ENCODE measurements at regions of chr20 and their contacts with region 1.

Region 1: GRCh38 chr20:2101865-2102584 is 398 bp downstream of the STK35 start:
- DNase-seq: peak; percentile 79 to 95 (median 91)
- ATAC-seq: peak; percentile 75
- H3K4me3 ChIP-seq: peak overlapping the region; percentile 79 to 100
- H3K4me3 Mint-ChIP-seq: peak overlapping the region; percentile 95
- H3K27ac ChIP-seq: peak overlapping the region; percentile 98 to 100
- H3K27ac Mint-ChIP-seq: peak overlapping the region; percentile 100
- H3K4me1 ChIP-seq: peaks cover 48% of the 10 kb centered on the region
- H3K4me1 Mint-ChIP-seq: peaks cover 41% of the 10 kb centered on the region
- H3K27me3 ChIP-seq: no peaks in the 10 kb centered on the region
- H3K27me3 Mint-ChIP-seq: no peaks in the 10 kb centered on the region
- CTCF ChIP-seq: no peak

Region 2: GRCh38 chr20:844473-845225 is 1257.4 kb before region 1 on chr20:
- CTCF ChIA-PET with region 1: no interaction called
- POLR2A ChIA-PET with region 1: no interaction called
- intact Hi-C with region 1: loop called in 1 of 2 experiments (anchors 10 kb)
- DNase-seq: peak; percentile 81 to 97 (median 90)
- ATAC-seq: peak; percentile 94
- H3K4me3 ChIP-seq: peak overlapping the region; percentile 65 to 71
- H3K4me3 Mint-ChIP-seq: peak overlapping the region; percentile 94
- H3K27ac ChIP-seq: peak overlapping the region; percentile 26 to 48
- H3K27ac Mint-ChIP-seq: peak overlapping the region; percentile 84
- H3K4me1 ChIP-seq: peaks cover 52% of the 10 kb centered on the region
- H3K4me1 Mint-ChIP-seq: peaks cover 54% of the 10 kb centered on the region
- H3K27me3 ChIP-seq: no peaks in the 10 kb centered on the region
- H3K27me3 Mint-ChIP-seq: no peaks in the 10 kb centered on the region
- CTCF ChIP-seq: no peak

Region 3: GRCh38 chr20:2470423-2471193 is 368.6 kb after region 1 on chr20 and contains the start of gene SNRPB:
- CTCF ChIA-PET with region 1: no interaction called
- POLR2A ChIA-PET with region 1: interaction called, 8 read pairs
- intact Hi-C with region 1: loop called in 1 of 2 experiments (anchors 2 kb)
- DNase-seq: peak; percentile 93 to 99 (median 97)
- ATAC-seq: peak; percentile 93
- H3K4me3 ChIP-seq: peak within 1 kb of the TSS; percentile 76 to 99
- H3K4me3 Mint-ChIP-seq: peak within 1 kb of the TSS; percentile 99
- H3K27ac ChIP-seq: peak within 1 kb of the TSS; percentile 95 to 99
- H3K27ac Mint-ChIP-seq: peak within 1 kb of the TSS; percentile 98
- H3K4me1 ChIP-seq: peaks cover 21% of the 10 kb centered on the region
- H3K4me1 Mint-ChIP-seq: peaks cover 44% of the 10 kb centered on the region
- H3K27me3 ChIP-seq: no peaks in the 10 kb centered on the region
- H3K27me3 Mint-ChIP-seq: no peaks in the 10 kb centered on the region
- CTCF ChIP-seq: no peak
- total RNA-seq, gene SNRPB: 176 to 180 TPM

Region 4: GRCh38 chr20:2523919-2524708 is 422.1 kb after region 1 on chr20:
- CTCF ChIA-PET with region 1: no interaction called
- POLR2A ChIA-PET with region 1: no interaction called
- intact Hi-C with region 1: loop called in 1 of 2 experiments (anchors 10 kb)
- DNase-seq: peak; percentile 86 to 97 (median 91)
- ATAC-seq: peak; percentile 84
- H3K4me3 ChIP-seq: peak overlapping the region; percentile 90 to 91
- H3K4me3 Mint-ChIP-seq: peak overlapping the region; percentile 89
- H3K27ac ChIP-seq: peak overlapping the region; percentile 47 to 58
- H3K27ac Mint-ChIP-seq: peak overlapping the region; percentile 60
- H3K4me1 ChIP-seq: peaks cover 10% of the 10 kb centered on the region
- H3K4me1 Mint-ChIP-seq: peaks cover 12% of the 10 kb centered on the region
- H3K27me3 ChIP-seq: no peaks in the 10 kb centered on the region
- H3K27me3 Mint-ChIP-seq: no peaks in the 10 kb centered on the region
- CTCF ChIP-seq: peak; percentile 92

Region 5: GRCh38 chr20:2663887-2664719 is 562.1 kb after region 1 on chr20 and contains the start of gene IDH3B:
- CTCF ChIA-PET with region 1: no interaction called
- POLR2A ChIA-PET with region 1: no interaction called
- intact Hi-C with region 1: loop called (anchors 5 kb)
- DNase-seq: peak; percentile 80 to 95 (median 93)
- ATAC-seq: peak; percentile 98
- H3K4me3 ChIP-seq: peak within 1 kb of the TSS; percentile 74 to 83
- H3K4me3 Mint-ChIP-seq: peak within 1 kb of the TSS; percentile 94
- H3K27ac ChIP-seq: peak within 1 kb of the TSS; percentile 82 to 95
- H3K27ac Mint-ChIP-seq: peak within 1 kb of the TSS; percentile 97
- H3K4me1 ChIP-seq: peaks cover 12% of the 10 kb centered on the region
- H3K4me1 Mint-ChIP-seq: peaks cover 20% of the 10 kb centered on the region
- H3K27me3 ChIP-seq: no peaks in the 10 kb centered on the region
- H3K27me3 Mint-ChIP-seq: peaks cover 7% of the 10 kb centered on the region
- CTCF ChIP-seq: no peak
- total RNA-seq, gene IDH3B: 174 to 184 TPM